ENCODE measurements at regions of chrX and their contacts with region 1.

Region 1: GRCh38 chrX:87664381-87664780 is 146.8 kb downstream of the KLHL4 start:
- DNase-seq: peak; percentile 49

Region 2: DNA sequence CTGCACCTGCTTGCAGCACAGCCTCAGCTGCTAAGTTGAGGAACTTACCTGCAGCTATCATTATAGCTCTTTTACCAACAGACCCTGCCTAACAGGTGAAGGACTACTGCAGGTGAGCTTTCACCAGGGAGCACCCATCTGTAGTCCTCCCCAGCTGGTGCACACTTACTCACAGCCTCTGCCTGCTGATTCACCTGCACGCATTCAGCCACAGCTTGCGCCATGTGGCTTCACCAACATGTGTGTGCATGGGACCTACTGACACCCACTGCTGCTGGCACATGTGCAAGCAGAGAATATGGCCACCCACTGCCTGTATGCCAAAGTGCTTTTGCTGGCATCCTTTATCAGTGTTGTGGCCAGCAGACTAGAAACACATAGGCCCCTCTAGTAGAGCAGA is 293.5 kb before region 1 on chrX:
- in situ Hi-C with region 1: loop called (anchors 25 kb)
- DNase-seq: no peak

Region 3: DNA sequence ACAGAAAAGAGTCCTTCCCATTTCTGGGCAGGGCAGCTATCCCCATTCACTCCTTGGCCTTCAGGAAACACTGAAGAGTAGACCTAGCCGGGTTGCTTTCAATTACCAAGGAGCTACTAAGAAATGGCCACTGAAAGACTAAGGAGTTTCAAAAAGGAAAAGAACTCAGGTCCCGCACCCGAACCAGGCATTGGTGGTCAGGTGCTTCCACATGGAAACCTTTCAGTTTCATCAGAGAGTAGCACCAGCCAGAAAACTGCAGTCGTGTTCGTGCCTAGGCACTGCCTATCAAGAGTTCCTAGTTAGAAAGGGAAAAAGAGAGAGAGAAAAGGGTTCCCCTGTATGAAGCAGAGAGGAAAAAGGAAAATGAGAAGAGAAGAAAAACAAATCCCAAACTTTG is 91.1 kb after region 1 on chrX:
- in situ Hi-C with region 1: no loop called
- DNase-seq: no peak